ENCODE measurements at regions of chr5 and their contacts with region 1.

Region 1: GRCh38 chr5:11719888-11720481 is 184.3 kb downstream of the CTNND2 start:
- DNase-seq: peak; percentile 77
- H3K4me3 Mint-ChIP-seq: no peak overlapping the region
- H3K27ac Mint-ChIP-seq: no peak overlapping the region
- H3K4me1 Mint-ChIP-seq: no peaks in the 10 kb centered on the region
- H3K27me3 Mint-ChIP-seq: no peaks in the 10 kb centered on the region
- CTCF ChIP-seq: peak; percentile 43

Region 2: GRCh38 chr5:12023614-12024241 is 303.7 kb after region 1 on chr5:
- CTCF ChIA-PET with region 1: interaction called, 11 read pairs
- POLR2A ChIA-PET with region 1: interaction called, 4 read pairs
- intact Hi-C with region 1: no loop called
- DNase-seq: peak; percentile 60
- H3K4me3 Mint-ChIP-seq: no peak overlapping the region
- H3K27ac Mint-ChIP-seq: no peak overlapping the region
- H3K4me1 Mint-ChIP-seq: no peaks in the 10 kb centered on the region
- H3K27me3 Mint-ChIP-seq: no peaks in the 10 kb centered on the region
- CTCF ChIP-seq: peak; percentile 44

Measured in MCF 10A (cell line).